ENCODE measurements at regions of chr14 and their contacts with region 1.

Region 1: GRCh38 chr14:95993768-95994592 is 45.2 kb upstream of the C14orf132 start:
- DNase-seq: peak in 4 of 6 donors; percentile 9 to 31 (median 20)
- ATAC-seq: peak in 3 of 4 donors; percentile 77
- H3K4me3 ChIP-seq: no peak overlapping the region
- H3K27ac ChIP-seq: no peak overlapping the region
- H3K4me1 ChIP-seq: no peaks in the 10 kb centered on the region
- H3K27me3 ChIP-seq: peaks cover 0 to 6% (median 0%) of the 10 kb centered on the region in 4 donors
- CTCF ChIP-seq: peak; percentile 69 to 84 (median 74)

Region 2: GRCh38 chr14:95452176-95452892 is 541.6 kb before region 1 on chr14:
- intact Hi-C with region 1: loop called in 1 of 3 experiments (anchors 10 kb)
- DNase-seq: no peak
- ATAC-seq: peak in 1 of 4 donors; percentile 42
- H3K4me3 ChIP-seq: no peak overlapping the region
- H3K27ac ChIP-seq: no peak overlapping the region
- H3K4me1 ChIP-seq: no peaks in the 10 kb centered on the region
- H3K27me3 ChIP-seq: no peaks in the 10 kb centered on the region
- CTCF ChIP-seq: no peak

Region 3: DNA sequence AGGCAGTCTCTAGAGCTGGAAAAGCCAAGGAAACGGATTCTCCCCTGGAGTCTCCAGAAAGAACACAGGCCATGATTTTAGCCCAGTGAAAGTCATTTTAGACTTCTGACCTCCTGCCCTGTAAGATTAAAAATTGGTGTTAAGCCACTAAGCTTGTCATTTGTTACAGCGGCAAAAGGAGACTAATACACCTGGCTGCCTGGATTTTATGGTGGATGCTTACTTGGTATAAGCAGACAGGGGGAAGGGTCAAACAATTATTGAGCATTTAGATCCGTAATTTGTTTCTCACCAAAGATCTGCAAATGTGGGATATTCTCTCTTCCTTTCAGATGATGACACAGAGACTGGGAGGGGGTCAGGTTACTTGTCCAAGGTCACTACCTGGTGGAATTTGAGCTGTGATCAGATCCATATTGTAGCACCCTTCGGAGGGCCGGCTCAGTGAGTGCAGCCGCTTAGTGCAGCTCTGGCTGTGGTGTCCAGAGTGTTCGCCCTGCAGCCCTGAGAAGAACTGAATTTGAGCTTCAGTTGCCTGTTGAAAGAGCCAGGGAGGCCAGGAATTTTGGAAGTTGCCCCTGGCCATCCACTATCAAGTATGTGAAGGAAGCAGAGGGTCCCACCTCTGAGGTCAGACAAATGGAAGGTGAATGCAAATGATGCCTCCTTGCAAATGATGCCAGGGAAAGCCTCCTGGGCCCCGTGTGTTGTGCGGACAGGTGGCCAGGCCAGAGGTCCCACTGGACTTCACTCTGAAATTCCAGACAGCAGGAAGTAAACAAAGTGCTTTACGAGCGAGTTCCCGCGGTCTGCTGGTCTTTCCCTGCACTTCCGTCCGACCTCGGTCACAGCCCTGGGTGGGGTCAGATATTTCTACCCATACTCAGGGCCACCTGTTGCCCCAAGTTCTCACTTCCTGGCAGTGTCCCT is 444.1 kb before region 1 on chr14:
- intact Hi-C with region 1: loop called in 1 of 3 experiments (anchors 5 kb)
- DNase-seq: no peak
- ATAC-seq: no peak
- H3K4me3 ChIP-seq: no peak overlapping the region
- H3K27ac ChIP-seq: no peak overlapping the region
- H3K4me1 ChIP-seq: no peaks in the 10 kb centered on the region
- H3K27me3 ChIP-seq: no peaks in the 10 kb centered on the region
- CTCF ChIP-seq: no peak

Region 4: GRCh38 chr14:96176811-96177603 is 183.0 kb after region 1 on chr14:
- intact Hi-C with region 1: no loop called
- DNase-seq: no peak
- ATAC-seq: peak; percentile 28 to 77 (median 68)
- H3K4me3 ChIP-seq: no peak overlapping the region
- H3K27ac ChIP-seq: no peak overlapping the region
- H3K4me1 ChIP-seq: no peaks in the 10 kb centered on the region
- H3K27me3 ChIP-seq: no peaks in the 10 kb centered on the region
- CTCF ChIP-seq: no peak

Region 5: GRCh38 chr14:96409701-96410100 is 415.7 kb after region 1 on chr14:
- intact Hi-C with region 1: no loop called
- DNase-seq: peak in 2 of 6 donors; percentile 28 to 37
- ATAC-seq: peak; percentile 23 to 59 (median 46)
- H3K4me3 ChIP-seq: no peak overlapping the region
- H3K27ac ChIP-seq: no peak overlapping the region
- H3K4me1 ChIP-seq: no peaks in the 10 kb centered on the region
- H3K27me3 ChIP-seq: no peaks in the 10 kb centered on the region
- CTCF ChIP-seq: no peak

Region 6: DNA sequence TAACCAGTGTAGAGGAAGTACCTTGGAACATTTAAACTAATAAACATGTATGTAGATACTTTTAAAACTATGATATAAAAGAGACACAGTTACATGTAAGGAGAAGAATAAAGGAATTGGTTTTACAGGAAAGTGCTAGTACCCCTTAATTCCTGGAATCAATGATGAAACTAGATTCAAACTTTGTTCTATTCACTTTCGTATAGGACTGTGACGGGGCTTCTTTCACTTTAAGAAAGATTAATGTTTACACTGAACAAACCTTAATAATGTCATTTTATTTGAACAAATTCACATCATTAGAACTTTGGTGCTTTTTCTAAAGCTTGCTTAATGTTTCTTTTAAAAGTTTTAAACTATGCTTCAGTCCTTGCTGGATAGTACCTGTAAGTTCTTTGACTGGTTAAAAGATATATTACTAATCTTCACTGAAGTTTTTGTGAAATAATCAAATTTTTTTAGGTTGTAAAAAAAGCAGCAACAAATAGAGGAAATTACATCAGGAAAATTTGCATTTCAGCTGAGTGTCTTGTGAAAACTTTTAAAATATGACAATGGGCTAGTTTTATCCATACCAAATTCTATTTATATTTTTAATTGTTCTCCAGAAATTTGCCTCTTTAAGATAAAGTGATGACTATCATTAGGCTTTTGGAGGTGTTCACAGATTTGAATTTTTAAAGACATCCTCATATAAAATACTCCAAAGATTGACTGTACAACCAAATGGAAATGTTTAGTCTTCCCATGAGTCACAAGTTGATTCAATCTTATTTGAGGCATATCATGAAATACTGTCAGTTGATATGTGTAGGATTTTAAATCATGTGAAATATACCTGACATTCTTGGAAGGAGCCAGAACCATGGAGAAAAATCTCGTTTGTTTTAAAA is 544.4 kb after region 1 on chr14:
- intact Hi-C with region 1: no loop called
- DNase-seq: no peak
- ATAC-seq: peak; percentile 71 to 91 (median 84)
- H3K4me3 ChIP-seq: peak overlapping the region in 1 of 4 donors; percentile 9
- H3K27ac ChIP-seq: peak overlapping the region in 2 of 4 donors; percentile 68 to 69
- H3K4me1 ChIP-seq: peaks cover 23 to 29% (median 23%) of the 10 kb centered on the region in 3 donors
- H3K27me3 ChIP-seq: no peaks in the 10 kb centered on the region
- CTCF ChIP-seq: no peak

Measured in pancreas (tissue), 10 donors.